ENCODE measurements at regions of chr2 and their contacts with region 1.

Region 1: DNA sequence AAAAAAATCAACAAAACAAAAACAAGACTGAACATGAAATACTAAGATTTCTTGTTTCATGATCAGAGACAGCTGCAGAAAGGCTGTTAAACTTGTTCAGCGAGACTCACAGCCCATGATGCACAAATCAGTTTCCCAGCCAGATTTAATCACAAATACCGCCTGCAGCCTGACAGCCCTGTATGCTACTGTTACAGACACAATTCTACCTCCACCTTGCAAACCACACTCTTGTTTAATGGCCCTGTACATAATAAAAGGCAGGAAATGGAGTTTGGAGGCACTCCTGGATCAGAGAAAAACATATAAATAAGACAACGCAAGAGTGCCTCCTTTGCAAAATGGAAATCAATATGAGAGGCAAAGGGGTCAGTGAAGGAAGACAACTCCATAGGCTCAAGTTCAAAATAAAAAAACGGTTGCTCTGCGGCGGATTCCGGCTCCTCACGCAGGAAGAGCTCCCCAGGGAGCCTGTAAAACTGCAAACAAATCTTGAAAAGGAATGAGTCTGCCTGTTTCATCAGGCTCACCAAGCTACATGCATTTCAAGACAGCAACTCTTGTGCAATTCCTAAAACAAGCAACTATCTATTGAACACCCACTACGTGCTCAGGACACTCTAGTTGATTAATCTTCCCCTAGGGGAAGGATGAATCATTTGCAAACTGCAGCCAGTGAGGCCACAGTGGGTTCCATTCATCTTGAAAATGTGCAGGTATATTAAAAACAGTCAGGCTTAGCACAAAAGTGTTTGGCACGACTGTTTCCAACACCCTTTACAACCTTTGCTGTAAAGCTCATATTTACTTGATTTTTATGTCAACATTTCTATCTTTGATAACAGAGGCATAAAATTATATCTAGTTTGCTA is 37.5 kb downstream of the TBC1D8 start:
- DNase-seq: no peak
- ATAC-seq: peak in 1 of 8 donors; percentile 21
- H3K4me3 ChIP-seq: no peak overlapping the region
- H3K27ac ChIP-seq: peak overlapping the region; percentile 60 to 93 (median 84)
- H3K4me1 ChIP-seq: peaks cover 33 to 97% (median 71%) of the 10 kb centered on the region in 9 donors
- H3K27me3 ChIP-seq: no peaks in the 10 kb centered on the region
- CTCF ChIP-seq: no peak

Region 2: DNA sequence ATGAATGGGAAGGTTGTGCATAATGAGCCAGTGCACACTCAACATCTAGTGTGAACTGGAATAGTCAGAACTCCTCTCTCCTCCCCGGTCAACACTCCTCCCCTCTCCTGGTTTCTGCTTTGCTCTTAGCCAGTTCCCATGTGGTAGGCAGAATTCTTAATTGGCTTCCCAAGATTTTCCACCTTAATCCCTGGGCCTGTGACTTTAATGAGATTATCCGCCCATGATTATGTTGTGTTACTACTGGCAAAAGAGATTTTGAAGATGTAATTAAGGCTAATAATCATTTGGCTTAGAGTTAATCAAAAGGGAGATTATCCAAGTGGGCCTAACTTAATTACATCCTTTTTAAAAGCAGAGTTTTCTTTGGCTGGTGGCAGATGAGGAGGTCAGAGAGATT is 1589.6 kb before region 1 on chr2:
- intact Hi-C with region 1: no loop called
- DNase-seq: no peak
- ATAC-seq: no peak
- H3K4me3 ChIP-seq: no peak overlapping the region
- H3K27ac ChIP-seq: no peak overlapping the region
- H3K4me1 ChIP-seq: no peaks in the 10 kb centered on the region
- H3K27me3 ChIP-seq: peaks cover 0 to 8% (median 0%) of the 10 kb centered on the region in 7 donors
- CTCF ChIP-seq: no peak

Region 3: DNA sequence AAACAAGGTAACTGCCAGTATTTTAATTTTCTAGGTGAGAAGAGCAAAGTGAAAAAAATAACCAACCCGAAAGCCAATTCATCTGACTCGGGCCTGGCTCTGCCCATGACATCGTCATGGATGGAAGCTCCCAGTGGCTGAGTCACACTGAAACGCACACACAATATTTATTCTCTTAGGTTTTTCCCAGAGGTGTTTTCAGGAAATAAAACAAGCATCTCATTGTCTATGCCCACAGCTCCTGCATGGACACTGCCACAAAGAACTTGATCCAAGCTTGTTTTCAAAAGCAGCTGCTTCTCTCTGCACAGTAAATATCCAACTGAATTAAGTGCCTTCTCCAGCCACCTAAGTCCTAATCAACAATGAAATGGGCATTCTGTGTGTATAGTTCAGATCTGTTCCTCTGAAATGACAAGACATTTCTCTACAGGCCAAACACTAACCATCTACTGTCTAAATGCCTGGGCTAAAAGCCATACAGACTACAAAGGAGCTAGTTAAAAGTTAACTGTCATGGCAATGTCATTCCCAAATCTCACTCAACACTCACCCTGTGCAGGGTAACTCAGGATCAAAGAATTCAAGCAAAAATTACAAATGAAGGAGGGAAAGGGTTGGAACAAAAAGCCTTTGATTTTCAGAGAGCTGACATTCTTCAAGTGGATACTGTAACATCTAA is 48.6 kb before region 1 on chr2:
- intact Hi-C with region 1: loop called in 2 of 10 experiments (anchors 2 to 5 kb)
- DNase-seq: no peak
- ATAC-seq: peak in 6 of 8 donors; percentile 10 to 52 (median 34)
- H3K4me3 ChIP-seq: no peak overlapping the region
- H3K27ac ChIP-seq: peak overlapping the region in 8 of 10 donors; percentile 17 to 76 (median 38)
- H3K4me1 ChIP-seq: peaks cover 12 to 55% (median 41%) of the 10 kb centered on the region in 9 donors
- H3K27me3 ChIP-seq: no peaks in the 10 kb centered on the region
- CTCF ChIP-seq: no peak

Measured in heart right ventricle (tissue), 16 donors.